Caco-2 (cell line): ENCODE measurements at regions of chr2 and their contacts with region 1.

Region 1: GRCh38 chr2:190088917-190089316 is 26.4 kb upstream of the MSTN start:
- DNase-seq: peak; percentile 38 to 65
- H3K4me3 ChIP-seq: no peak overlapping the region
- H3K4me3 Mint-ChIP-seq: no peak overlapping the region
- H3K27ac Mint-ChIP-seq: no peak overlapping the region
- H3K4me1 ChIP-seq: no peaks in the 10 kb centered on the region
- H3K4me1 Mint-ChIP-seq: no peaks in the 10 kb centered on the region
- H3K27me3 ChIP-seq: no peaks in the 10 kb centered on the region
- H3K27me3 Mint-ChIP-seq: no peaks in the 10 kb centered on the region
- CTCF ChIP-seq: peak; percentile 75 to 76

Region 2: GRCh38 chr2:189995679-189996078 is 93.2 kb before region 1 on chr2:
- CTCF ChIA-PET with region 1: no interaction called
- POLR2A ChIA-PET with region 1: no interaction called
- intact Hi-C with region 1: no loop called
- DNase-seq: no peak
- H3K4me3 ChIP-seq: no peak overlapping the region
- H3K4me3 Mint-ChIP-seq: no peak overlapping the region
- H3K27ac Mint-ChIP-seq: no peak overlapping the region
- H3K4me1 ChIP-seq: no peaks in the 10 kb centered on the region
- H3K4me1 Mint-ChIP-seq: no peaks in the 10 kb centered on the region
- H3K27me3 ChIP-seq: no peaks in the 10 kb centered on the region
- H3K27me3 Mint-ChIP-seq: no peaks in the 10 kb centered on the region
- CTCF ChIP-seq: no peak

Region 3: GRCh38 chr2:190121971-190122370 is 33.1 kb after region 1 on chr2:
- CTCF ChIA-PET with region 1: no interaction called
- POLR2A ChIA-PET with region 1: no interaction called
- intact Hi-C with region 1: loop called (anchors 1 kb)
- DNase-seq: peak in 1 of 2 experiments; percentile 17
- H3K4me3 ChIP-seq: no peak overlapping the region
- H3K4me3 Mint-ChIP-seq: no peak overlapping the region
- H3K27ac Mint-ChIP-seq: no peak overlapping the region
- H3K4me1 ChIP-seq: no peaks in the 10 kb centered on the region
- H3K4me1 Mint-ChIP-seq: no peaks in the 10 kb centered on the region
- H3K27me3 ChIP-seq: no peaks in the 10 kb centered on the region
- H3K27me3 Mint-ChIP-seq: no peaks in the 10 kb centered on the region
- CTCF ChIP-seq: peak; percentile 31 to 57

Region 4: GRCh38 chr2:190180313-190181122 is 91.6 kb after region 1 on chr2:
- CTCF ChIA-PET with region 1: interaction called, 20 read pairs
- POLR2A ChIA-PET with region 1: no interaction called
- intact Hi-C with region 1: loop called (anchors 1 kb)
- DNase-seq: peak; percentile 84 to 89
- H3K4me3 ChIP-seq: peak overlapping the region; percentile 78
- H3K4me3 Mint-ChIP-seq: peak overlapping the region; percentile 83
- H3K27ac Mint-ChIP-seq: no peak overlapping the region
- H3K4me1 ChIP-seq: 0 out of 2 replicates have a peak, but pooled peaks cover 4% of the 10 kb centered on the region
- H3K4me1 Mint-ChIP-seq: peaks cover 6% of the 10 kb centered on the region
- H3K27me3 ChIP-seq: no peaks in the 10 kb centered on the region
- H3K27me3 Mint-ChIP-seq: no peaks in the 10 kb centered on the region
- CTCF ChIP-seq: peak; percentile 47 to 92

Region 5: GRCh38 chr2:190277234-190278112 is 188.6 kb after region 1 on chr2:
- CTCF ChIA-PET with region 1: no interaction called
- POLR2A ChIA-PET with region 1: no interaction called
- intact Hi-C with region 1: loop called (anchors 1 kb)
- DNase-seq: peak in 1 of 2 experiments; percentile 23
- H3K4me3 ChIP-seq: no peak overlapping the region
- H3K4me3 Mint-ChIP-seq: no peak overlapping the region
- H3K27ac Mint-ChIP-seq: no peak overlapping the region
- H3K4me1 ChIP-seq: peaks cover 27% of the 10 kb centered on the region
- H3K4me1 Mint-ChIP-seq: peaks cover 23% of the 10 kb centered on the region
- H3K27me3 ChIP-seq: no peaks in the 10 kb centered on the region
- H3K27me3 Mint-ChIP-seq: no peaks in the 10 kb centered on the region
- CTCF ChIP-seq: peak; percentile 31 to 39

Region 6: DNA sequence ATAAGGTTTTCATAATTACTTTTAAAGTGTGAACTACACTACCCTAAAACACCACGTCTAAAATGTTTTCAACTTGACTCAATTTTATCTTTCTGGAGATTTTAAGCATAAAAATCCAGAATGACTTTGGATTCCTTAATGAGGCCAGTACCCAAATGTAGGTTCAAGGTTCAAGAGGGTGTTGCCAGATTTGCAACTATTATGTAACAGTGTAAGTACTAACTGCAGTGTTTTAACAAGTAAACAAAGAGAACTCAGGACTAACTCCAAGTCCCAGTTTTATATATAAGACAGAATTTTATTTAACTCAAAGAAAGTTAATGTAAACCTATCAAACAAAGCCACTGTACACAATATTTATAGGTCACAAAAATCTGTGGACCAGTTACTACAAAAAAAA is 225.0 kb after region 1 on chr2:
- CTCF ChIA-PET with region 1: no interaction called
- POLR2A ChIA-PET with region 1: no interaction called
- intact Hi-C with region 1: loop called (anchors 1 kb)
- DNase-seq: no peak
- H3K4me3 ChIP-seq: no peak overlapping the region
- H3K4me3 Mint-ChIP-seq: no peak overlapping the region
- H3K27ac Mint-ChIP-seq: no peak overlapping the region
- H3K4me1 ChIP-seq: peaks cover 12% of the 10 kb centered on the region; the same call in 1 of the 2 replicates
- H3K4me1 Mint-ChIP-seq: peaks cover 7% of the 10 kb centered on the region
- H3K27me3 ChIP-seq: no peaks in the 10 kb centered on the region
- H3K27me3 Mint-ChIP-seq: no peaks in the 10 kb centered on the region
- CTCF ChIP-seq: no peak

Region 7: DNA sequence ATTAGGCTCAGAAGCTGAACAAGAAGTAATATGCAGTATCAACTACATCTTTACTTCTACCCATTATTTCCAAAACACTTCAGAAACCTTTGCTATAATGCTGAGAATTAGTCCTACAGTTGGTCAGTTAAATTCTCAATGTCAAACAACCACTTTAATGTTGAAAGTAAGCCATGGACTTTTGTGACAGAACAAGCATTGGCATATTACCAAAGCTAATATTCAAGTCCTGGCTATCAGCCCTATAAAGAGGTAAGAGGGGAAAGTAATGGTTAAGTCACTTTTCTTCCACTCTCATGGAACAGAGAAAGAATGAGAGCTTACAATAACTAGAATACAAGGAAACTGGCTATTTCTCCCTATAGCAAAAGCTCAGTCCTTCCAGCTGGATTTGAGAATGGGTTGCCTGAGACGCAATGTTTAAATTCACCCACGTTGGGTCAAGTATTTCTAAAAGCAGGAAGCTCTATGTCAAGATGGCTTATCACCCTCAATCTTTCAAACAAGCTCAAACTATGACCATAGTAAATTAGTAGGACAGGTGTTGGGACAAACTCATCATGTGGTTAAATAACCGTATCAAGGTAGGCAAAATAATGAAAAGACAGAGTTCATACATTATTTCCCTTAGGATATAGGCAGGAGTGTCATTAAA is 287.8 kb after region 1 on chr2:
- CTCF ChIA-PET with region 1: no interaction called
- POLR2A ChIA-PET with region 1: no interaction called
- intact Hi-C with region 1: loop called (anchors 1 kb)
- DNase-seq: no peak
- H3K4me3 ChIP-seq: no peak overlapping the region
- H3K4me3 Mint-ChIP-seq: no peak overlapping the region
- H3K27ac Mint-ChIP-seq: no peak overlapping the region
- H3K4me1 ChIP-seq: peaks cover 8% of the 10 kb centered on the region
- H3K4me1 Mint-ChIP-seq: peaks cover 7% of the 10 kb centered on the region
- H3K27me3 ChIP-seq: no peaks in the 10 kb centered on the region
- H3K27me3 Mint-ChIP-seq: no peaks in the 10 kb centered on the region
- CTCF ChIP-seq: no peak

Region 8: DNA sequence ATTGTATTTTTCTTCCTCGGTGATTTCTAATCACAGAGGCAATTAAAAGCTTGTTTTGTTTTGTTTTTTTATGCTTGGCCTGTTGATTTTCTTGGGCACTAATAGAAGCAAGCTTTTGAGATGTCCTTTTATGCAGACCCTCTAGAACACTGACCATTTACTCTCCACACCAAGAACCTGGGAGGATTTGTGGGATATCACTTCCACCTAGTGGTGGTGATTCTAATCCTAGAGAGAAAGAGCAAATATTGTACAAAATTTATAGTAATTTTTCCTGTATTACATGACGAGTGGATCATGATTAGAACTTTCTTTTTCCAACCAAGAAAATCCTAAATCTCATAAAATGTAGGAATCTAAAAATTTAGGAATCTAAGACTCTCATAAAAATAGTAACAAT is 422.2 kb after region 1 on chr2:
- CTCF ChIA-PET with region 1: no interaction called
- POLR2A ChIA-PET with region 1: no interaction called
- intact Hi-C with region 1: loop called (anchors 1 kb)
- DNase-seq: peak in 1 of 2 experiments; percentile 36
- H3K4me3 ChIP-seq: no peak overlapping the region
- H3K4me3 Mint-ChIP-seq: no peak overlapping the region
- H3K27ac Mint-ChIP-seq: no peak overlapping the region
- H3K4me1 ChIP-seq: no peaks in the 10 kb centered on the region
- H3K4me1 Mint-ChIP-seq: no peaks in the 10 kb centered on the region
- H3K27me3 ChIP-seq: no peaks in the 10 kb centered on the region
- H3K27me3 Mint-ChIP-seq: no peaks in the 10 kb centered on the region
- CTCF ChIP-seq: peak; percentile 42 to 60